Adrenal gland (tissue), 19 donors: ENCODE measurements at regions of chr1 and their contacts with region 1.

Region 1: DNA sequence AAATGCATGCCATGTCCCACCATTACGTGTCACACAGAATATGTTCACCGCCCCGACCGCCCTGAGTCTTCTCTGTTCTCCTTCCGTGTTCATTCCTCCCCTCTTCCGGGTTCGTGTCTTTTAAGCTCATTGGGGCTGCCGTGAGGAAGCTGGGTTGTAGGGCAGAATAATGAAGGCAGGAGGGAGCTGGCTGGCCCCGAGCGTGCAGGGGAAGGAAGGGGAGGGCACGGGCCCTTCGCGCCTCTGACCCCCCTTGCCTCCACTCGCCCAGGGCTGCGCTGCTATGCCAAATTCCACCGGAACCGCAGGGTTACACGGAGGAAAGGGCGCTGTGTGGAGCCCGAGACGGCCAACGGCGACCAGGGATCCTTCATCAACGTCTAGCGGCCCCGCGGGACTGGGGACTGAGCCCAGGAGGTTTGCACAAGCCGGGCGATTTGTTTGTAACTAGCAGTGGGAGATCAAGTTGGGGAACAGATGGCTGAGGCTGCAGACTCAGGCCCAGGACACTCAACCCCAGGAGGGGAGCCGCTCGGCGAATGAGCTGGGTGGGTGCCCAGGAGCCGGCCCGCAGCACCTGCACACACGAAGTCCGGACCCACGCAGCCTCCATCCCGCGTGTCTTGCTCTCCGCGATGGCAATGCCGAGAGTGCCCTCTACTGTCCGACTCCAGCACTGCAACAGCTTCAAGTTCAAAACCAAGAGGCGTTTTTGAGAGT is 16.5 kb upstream of the AGTRAP start:
- DNase-seq: peak; percentile 73 to 94 (median 84)
- H3K4me3 ChIP-seq: peak overlapping the region in 2 of 4 donors; percentile 9 to 19
- H3K27ac ChIP-seq: peak overlapping the region in 2 of 5 donors; percentile 60 to 62
- H3K4me1 ChIP-seq: peaks cover 0 to 9% of the 10 kb centered on the region in 2 donors
- H3K27me3 ChIP-seq: no peaks in the 10 kb centered on the region
- CTCF ChIP-seq: peak; percentile 88 to 97 (median 93)
- POLR2A ChIP-seq: no peak

Region 2: GRCh38 chr1:11337580-11338073 is 381.8 kb before region 1 on chr1:
- intact Hi-C with region 1: loop called in 1 of 2 experiments (anchors 10 kb)
- DNase-seq: peak; percentile 37 to 71 (median 65)
- H3K4me3 ChIP-seq: no peak overlapping the region
- H3K27ac ChIP-seq: no peak overlapping the region
- H3K4me1 ChIP-seq: peaks cover 0 to 9% of the 10 kb centered on the region in 2 donors
- H3K27me3 ChIP-seq: peaks cover 3% of the 10 kb centered on the region
- CTCF ChIP-seq: peak; percentile 62 to 81 (median 72)
- POLR2A ChIP-seq: no peak

Region 3: GRCh38 chr1:11407301-11407994 is 312.0 kb before region 1 on chr1:
- intact Hi-C with region 1: no loop called
- DNase-seq: no peak
- H3K4me3 ChIP-seq: no peak overlapping the region
- H3K27ac ChIP-seq: no peak overlapping the region
- H3K4me1 ChIP-seq: no peaks in the 10 kb centered on the region
- H3K27me3 ChIP-seq: peaks cover 2% of the 10 kb centered on the region
- CTCF ChIP-seq: no peak
- POLR2A ChIP-seq: no peak

Region 4: DNA sequence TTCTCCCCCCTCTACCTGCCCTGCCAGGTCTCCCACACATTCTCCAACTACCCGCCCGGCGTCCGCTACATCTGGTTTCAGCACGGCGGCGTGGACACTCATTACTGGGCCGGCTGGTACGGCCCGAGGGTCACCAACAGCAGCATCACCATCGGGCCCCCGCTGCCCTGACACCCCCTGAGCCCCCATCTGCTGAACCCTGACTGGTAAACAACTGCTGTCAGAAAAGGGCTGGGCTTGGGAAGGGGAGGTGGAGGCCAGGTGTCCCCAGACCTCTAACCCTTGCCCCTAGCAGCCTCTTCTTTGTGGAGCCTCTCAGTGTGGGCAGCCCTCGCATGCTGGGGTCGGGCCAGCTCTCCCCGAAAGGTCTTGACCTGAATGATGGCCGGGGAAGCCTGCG is 58.4 kb before region 1 on chr1:
- intact Hi-C with region 1: loop called in 1 of 2 experiments (anchors 5 kb)
- DNase-seq: no peak
- H3K4me3 ChIP-seq: no peak overlapping the region
- H3K27ac ChIP-seq: no peak overlapping the region
- H3K4me1 ChIP-seq: no peaks in the 10 kb centered on the region
- H3K27me3 ChIP-seq: no peaks in the 10 kb centered on the region
- CTCF ChIP-seq: no peak
- POLR2A ChIP-seq: no peak

Region 5: GRCh38 chr1:11858968-11859871 is 139.7 kb after region 1 on chr1:
- intact Hi-C with region 1: no loop called
- DNase-seq: peak in 6 of 7 donors; percentile 68 to 81 (median 75)
- H3K4me3 ChIP-seq: no peak overlapping the region
- H3K27ac ChIP-seq: no peak overlapping the region
- H3K4me1 ChIP-seq: no peaks in the 10 kb centered on the region
- H3K27me3 ChIP-seq: peaks cover 26% of the 10 kb centered on the region
- CTCF ChIP-seq: peak in 3 of 6 experiments; percentile 15 to 52 (median 27)
- POLR2A ChIP-seq: no peak